Calu3 (cell line): ENCODE measurements at regions of chr3 and their contacts with region 1.

Region 1: GRCh38 chr3:99532246-99532645 is 106.1 kb upstream of the COL8A1 start:
- DNase-seq: peak; percentile 66
- H3K4me3 Mint-ChIP-seq: no peak overlapping the region
- H3K27ac Mint-ChIP-seq: no peak overlapping the region
- H3K4me1 Mint-ChIP-seq: peaks cover 18% of the 10 kb centered on the region
- H3K27me3 Mint-ChIP-seq: no peaks in the 10 kb centered on the region
- CTCF ChIP-seq: peak; percentile 71

Region 2: GRCh38 chr3:99023590-99024192 is 508.6 kb before region 1 on chr3:
- CTCF ChIA-PET with region 1: no interaction called
- intact Hi-C with region 1: loop called (anchors 10 kb)
- DNase-seq: peak; percentile 7
- H3K4me3 Mint-ChIP-seq: no peak overlapping the region
- H3K27ac Mint-ChIP-seq: no peak overlapping the region
- H3K4me1 Mint-ChIP-seq: no peaks in the 10 kb centered on the region
- H3K27me3 Mint-ChIP-seq: no peaks in the 10 kb centered on the region
- CTCF ChIP-seq: peak; percentile 30

Region 3: DNA sequence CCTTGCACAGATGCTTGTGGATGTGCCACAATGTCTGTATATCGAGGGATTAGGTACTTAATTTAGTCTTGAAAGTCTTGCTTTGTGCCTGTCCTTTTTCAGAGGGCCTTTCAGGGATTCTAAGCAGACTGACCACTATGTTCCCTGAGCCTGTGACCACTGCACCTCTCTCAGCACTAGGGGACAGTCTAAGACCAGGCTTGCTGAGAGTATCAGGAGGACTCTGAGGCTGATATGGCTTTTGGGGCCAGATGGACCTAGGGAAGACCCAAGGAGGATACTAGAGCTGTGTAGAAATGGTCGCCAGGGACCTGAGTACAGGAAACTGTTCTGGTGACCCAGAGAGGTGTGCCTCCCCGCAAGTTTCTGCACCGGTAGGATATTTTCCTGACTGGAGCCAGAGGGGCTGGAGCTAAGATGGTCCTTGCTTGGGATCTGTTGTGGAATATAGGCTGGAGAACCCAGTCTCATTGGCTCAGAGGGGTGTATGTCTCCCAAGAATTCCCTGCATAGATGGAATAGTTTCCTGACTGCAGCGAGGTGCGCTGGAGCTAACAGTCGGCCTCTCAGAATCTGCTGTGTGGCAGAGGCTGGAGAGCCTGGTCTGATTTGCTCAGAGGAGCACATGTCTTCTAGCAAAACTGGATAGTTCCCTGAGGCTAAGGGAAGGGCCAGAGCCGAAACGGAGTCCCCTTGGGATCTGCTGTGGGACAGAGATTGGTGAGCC is 417.5 kb before region 1 on chr3:
- CTCF ChIA-PET with region 1: no interaction called
- intact Hi-C with region 1: loop called (anchors 1 kb)
- DNase-seq: peak; percentile 43
- H3K4me3 Mint-ChIP-seq: no peak overlapping the region
- H3K27ac Mint-ChIP-seq: no peak overlapping the region
- H3K4me1 Mint-ChIP-seq: no peaks in the 10 kb centered on the region
- H3K27me3 Mint-ChIP-seq: no peaks in the 10 kb centered on the region
- CTCF ChIP-seq: peak; percentile 54

Region 4: DNA sequence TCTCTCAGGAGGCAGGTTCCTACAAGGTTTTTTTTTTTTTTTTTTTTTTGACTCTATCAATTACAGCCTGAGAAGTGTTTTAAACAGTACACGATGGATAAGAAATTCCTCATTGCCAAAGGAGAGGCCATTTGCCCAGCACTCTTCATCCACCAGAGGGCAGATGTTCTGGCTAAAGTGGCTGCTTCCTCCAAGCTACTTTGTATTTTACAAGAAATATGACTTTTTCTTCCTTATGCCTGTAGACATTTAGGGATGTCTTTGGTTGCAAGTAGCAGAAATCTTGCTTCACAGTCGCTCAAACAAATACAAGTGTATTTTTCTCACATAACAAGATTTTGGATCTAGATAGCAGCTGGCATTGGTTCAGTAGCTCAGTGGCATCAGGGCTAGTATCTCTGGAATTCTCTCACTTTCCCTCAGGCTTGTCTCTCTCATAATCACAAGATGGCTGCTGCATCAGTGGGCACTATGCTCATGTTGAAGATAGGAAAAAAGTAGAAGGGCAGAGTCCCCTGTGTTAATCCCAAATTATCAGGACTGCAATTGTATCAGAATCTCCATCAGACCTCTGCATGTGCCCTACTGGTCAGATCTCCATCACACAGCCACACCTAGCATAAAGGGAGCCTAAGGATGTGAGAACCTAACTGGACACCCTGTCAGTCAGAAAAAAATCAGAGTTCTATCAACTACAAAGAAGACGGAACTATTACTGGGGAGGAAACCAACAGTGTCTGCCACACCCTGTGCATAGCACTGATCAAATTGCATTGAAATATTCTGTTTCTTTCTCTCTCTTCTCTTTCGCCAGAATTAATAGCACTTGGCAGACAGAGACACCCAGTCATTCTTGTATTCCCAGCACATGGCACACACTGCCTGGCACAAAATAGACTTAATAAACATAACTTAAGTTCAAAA is 32.7 kb before region 1 on chr3:
- CTCF ChIA-PET with region 1: interaction called, 4 read pairs
- intact Hi-C with region 1: loop called (anchors 2 kb)
- DNase-seq: peak; percentile 56
- H3K4me3 Mint-ChIP-seq: no peak overlapping the region
- H3K27ac Mint-ChIP-seq: no peak overlapping the region
- H3K4me1 Mint-ChIP-seq: peaks cover 7% of the 10 kb centered on the region
- H3K27me3 Mint-ChIP-seq: no peaks in the 10 kb centered on the region
- CTCF ChIP-seq: peak; percentile 25

Region 5: DNA sequence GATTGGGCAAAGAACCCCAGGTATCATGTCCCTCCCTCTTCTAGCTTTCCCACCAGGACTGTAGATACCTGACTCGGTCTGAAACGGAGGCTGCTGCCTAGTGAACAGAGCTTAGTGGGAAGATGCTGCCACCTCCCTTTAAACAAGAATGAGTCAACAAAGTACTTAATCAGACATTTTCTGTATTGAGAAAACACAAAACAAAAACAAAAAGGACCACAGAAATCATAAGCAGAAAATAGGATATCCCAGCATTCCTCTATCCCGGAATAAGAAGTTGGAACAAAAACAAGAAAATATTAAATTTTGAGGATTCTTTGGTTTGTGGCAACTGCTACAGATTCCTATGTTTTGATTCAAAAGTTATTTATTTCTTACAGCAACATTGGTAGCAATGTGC is 54.5 kb after region 1 on chr3:
- CTCF ChIA-PET with region 1: no interaction called
- intact Hi-C with region 1: no loop called
- DNase-seq: no peak
- H3K4me3 Mint-ChIP-seq: no peak overlapping the region
- H3K27ac Mint-ChIP-seq: no peak overlapping the region
- H3K4me1 Mint-ChIP-seq: no peaks in the 10 kb centered on the region
- H3K27me3 Mint-ChIP-seq: no peaks in the 10 kb centered on the region
- CTCF ChIP-seq: no peak

Region 6: DNA sequence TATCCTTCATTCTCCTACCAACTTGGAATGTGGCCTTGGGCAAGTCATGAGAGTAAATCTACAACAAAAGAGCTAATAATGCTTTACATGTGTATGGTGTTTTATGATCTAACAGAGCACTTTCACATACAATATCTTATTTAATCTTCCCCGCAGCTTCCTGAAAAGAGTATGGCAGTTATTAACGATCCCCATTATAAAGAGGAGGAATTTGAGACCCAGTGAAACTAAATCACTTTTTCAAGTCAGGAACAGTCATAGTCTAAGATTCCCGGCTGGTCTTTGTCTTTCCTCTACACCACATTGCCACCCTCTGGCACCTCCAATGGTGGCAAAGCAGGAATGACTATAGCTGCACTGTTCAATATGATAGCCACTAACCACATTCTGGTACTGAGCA is 215.7 kb after region 1 on chr3:
- CTCF ChIA-PET with region 1: interaction called, 3 read pairs
- intact Hi-C with region 1: loop called (anchors 5 kb)
- DNase-seq: peak; percentile 44
- H3K4me3 Mint-ChIP-seq: no peak overlapping the region
- H3K27ac Mint-ChIP-seq: no peak overlapping the region
- H3K4me1 Mint-ChIP-seq: peaks cover 17% of the 10 kb centered on the region
- H3K27me3 Mint-ChIP-seq: no peaks in the 10 kb centered on the region
- CTCF ChIP-seq: peak; percentile 18